T-cell (primary cell): ENCODE measurements at regions of chr10 and their contacts with region 1.

Region 1: GRCh38 chr10:22640359-22640758 is 74.0 kb downstream of the PIP4K2A start:
- DNase-seq: no peak
- ATAC-seq: no peak
- H3K4me3 ChIP-seq: no peak overlapping the region
- H3K4me3 Mint-ChIP-seq: no peak overlapping the region
- H3K27ac ChIP-seq: no peak overlapping the region
- H3K27ac Mint-ChIP-seq: peak overlapping the region; percentile 28 to 75
- H3K4me1 ChIP-seq: peaks cover 37 to 74% of the 10 kb centered on the region in 2 experiments
- H3K4me1 Mint-ChIP-seq: peaks cover 83 to 92% (median 89%) of the 10 kb centered on the region in 3 donors
- H3K27me3 ChIP-seq: no peaks in the 10 kb centered on the region
- H3K27me3 Mint-ChIP-seq: no peaks in the 10 kb centered on the region

Region 2: GRCh38 chr10:22742678-22743077 is 102.3 kb after region 1 on chr10:
- CTCF ChIA-PET with region 1: no interaction called
- POLR2A ChIA-PET with region 1: interaction called in 1 of 2 experiments, 17 read pairs
- DNase-seq: no peak
- ATAC-seq: no peak
- H3K4me3 ChIP-seq: no peak overlapping the region
- H3K4me3 Mint-ChIP-seq: no peak overlapping the region
- H3K27ac ChIP-seq: no peak overlapping the region
- H3K27ac Mint-ChIP-seq: no peak overlapping the region
- H3K4me1 ChIP-seq: no peaks in the 10 kb centered on the region
- H3K4me1 Mint-ChIP-seq: peaks cover 0 to 2% (median 0%) of the 10 kb centered on the region in 3 donors
- H3K27me3 ChIP-seq: peaks cover 0 to 1% of the 10 kb centered on the region in 2 experiments
- H3K27me3 Mint-ChIP-seq: no peaks in the 10 kb centered on the region